Natural killer cell (primary cell): ENCODE measurements at regions of chr19 and their contacts with region 1.

Region 1: GRCh38 chr19:9323919-9324583 is at the start of gene ZNF559:
- DNase-seq: peak; percentile 98 to 99
- ATAC-seq: peak; percentile 95 to 99 (median 95)
- H3K4me3 ChIP-seq: peak within 1 kb of the TSS; percentile 95
- H3K4me3 Mint-ChIP-seq: peak within 1 kb of the TSS; percentile 98
- H3K27ac ChIP-seq: peak within 1 kb of the TSS; percentile 92
- H3K27ac Mint-ChIP-seq: peak within 1 kb of the TSS; percentile 97 to 98
- H3K4me1 ChIP-seq: peaks cover 19% of the 10 kb centered on the region
- H3K4me1 Mint-ChIP-seq: peaks cover 20 to 31% of the 10 kb centered on the region in 2 donors
- H3K27me3 ChIP-seq: no peaks in the 10 kb centered on the region
- H3K27me3 Mint-ChIP-seq: no peaks in the 10 kb centered on the region
- CTCF ChIP-seq: no peak
- total RNA-seq, gene ZNF559: 10.0 to 20.5 (median 11.4) TPM

Region 2: DNA sequence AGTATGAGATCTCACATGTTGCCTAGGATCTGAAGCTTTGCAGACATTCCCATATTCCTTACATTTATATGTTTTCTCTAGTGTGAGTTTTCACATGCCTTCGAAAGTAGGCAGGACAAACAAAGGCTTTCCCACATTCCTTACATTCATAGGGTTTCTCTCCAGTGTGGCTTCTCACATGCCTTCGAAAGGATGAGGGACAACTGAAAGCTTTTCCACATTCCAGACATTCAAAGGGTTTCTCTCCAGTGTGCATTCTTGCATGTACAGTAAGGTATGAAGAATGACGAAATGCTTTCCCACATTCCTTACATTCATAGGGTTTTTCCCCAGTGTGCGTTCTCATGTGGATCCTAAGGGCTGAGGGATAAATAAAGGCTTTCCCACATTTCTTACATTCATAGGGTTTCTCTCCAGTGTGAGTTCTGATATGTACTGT is 28.6 kb before region 1 on chr19:
- intact Hi-C with region 1: no loop called
- DNase-seq: no peak
- ATAC-seq: no peak
- H3K4me3 ChIP-seq: no peak overlapping the region
- H3K4me3 Mint-ChIP-seq: no peak overlapping the region
- H3K27ac ChIP-seq: no peak overlapping the region
- H3K27ac Mint-ChIP-seq: no peak overlapping the region
- H3K4me1 ChIP-seq: no peaks in the 10 kb centered on the region
- H3K4me1 Mint-ChIP-seq: peaks cover 0 to 5% of the 10 kb centered on the region in 2 donors
- H3K27me3 ChIP-seq: no peaks in the 10 kb centered on the region
- H3K27me3 Mint-ChIP-seq: no peaks in the 10 kb centered on the region
- CTCF ChIP-seq: no peak

Region 3: GRCh38 chr19:9309139-9309973 is 14.7 kb before region 1 on chr19 and contains the start of gene ZNF699:
- intact Hi-C with region 1: loop called (anchors 1 kb)
- DNase-seq: peak; percentile 96 to 100
- ATAC-seq: peak; percentile 89 to 95 (median 90)
- H3K4me3 ChIP-seq: peak within 1 kb of the TSS; percentile 94
- H3K4me3 Mint-ChIP-seq: peak within 1 kb of the TSS; percentile 89
- H3K27ac ChIP-seq: peak within 1 kb of the TSS; percentile 90
- H3K27ac Mint-ChIP-seq: peak within 1 kb of the TSS; percentile 96 to 99
- H3K4me1 ChIP-seq: peaks cover 17% of the 10 kb centered on the region
- H3K4me1 Mint-ChIP-seq: peaks cover 30 to 46% of the 10 kb centered on the region in 2 donors
- H3K27me3 ChIP-seq: no peaks in the 10 kb centered on the region
- H3K27me3 Mint-ChIP-seq: no peaks in the 10 kb centered on the region
- CTCF ChIP-seq: no peak
- total RNA-seq, gene ZNF699: 13.4 to 15.3 (median 15.2) TPM

Region 4: GRCh38 chr19:9435279-9436268 is 111.5 kb after region 1 on chr19 and contains the start of gene ZNF266:
- intact Hi-C with region 1: loop called (anchors 1 kb)
- DNase-seq: peak; percentile 91 to 98
- ATAC-seq: peak; percentile 81 to 91 (median 84)
- H3K4me3 ChIP-seq: peak within 1 kb of the TSS; percentile 73
- H3K4me3 Mint-ChIP-seq: peak within 1 kb of the TSS; percentile 98
- H3K27ac ChIP-seq: peak within 1 kb of the TSS; percentile 91
- H3K27ac Mint-ChIP-seq: peak within 1 kb of the TSS; percentile 97
- H3K4me1 ChIP-seq: peaks cover 14% of the 10 kb centered on the region
- H3K4me1 Mint-ChIP-seq: peaks cover 53 to 59% of the 10 kb centered on the region in 2 donors
- H3K27me3 ChIP-seq: no peaks in the 10 kb centered on the region
- H3K27me3 Mint-ChIP-seq: no peaks in the 10 kb centered on the region
- CTCF ChIP-seq: peak; percentile 75
- total RNA-seq, gene ZNF266: 89.9 to 108 (median 104) TPM

Region 5: GRCh38 chr19:9584073-9584833 is 260.2 kb after region 1 on chr19 and contains the start of gene ZNF121:
- intact Hi-C with region 1: loop called (anchors 5 kb)
- DNase-seq: peak; percentile 83 to 89
- ATAC-seq: peak; percentile 88 to 89 (median 89)
- H3K4me3 ChIP-seq: peak within 1 kb of the TSS; percentile 95
- H3K4me3 Mint-ChIP-seq: peak within 1 kb of the TSS; percentile 96
- H3K27ac ChIP-seq: peak within 1 kb of the TSS; percentile 94
- H3K27ac Mint-ChIP-seq: peak within 1 kb of the TSS; percentile 97
- H3K4me1 ChIP-seq: peaks cover 27% of the 10 kb centered on the region
- H3K4me1 Mint-ChIP-seq: peaks cover 41 to 44% of the 10 kb centered on the region in 2 donors
- H3K27me3 ChIP-seq: no peaks in the 10 kb centered on the region
- H3K27me3 Mint-ChIP-seq: peaks cover 9 to 19% of the 10 kb centered on the region in 2 donors
- CTCF ChIP-seq: no peak
- total RNA-seq, gene ZNF121: 32.9 to 35.7 (median 33.1) TPM